ENCODE measurements at regions of chr6 and their contacts with region 1.

Region 1: DNA sequence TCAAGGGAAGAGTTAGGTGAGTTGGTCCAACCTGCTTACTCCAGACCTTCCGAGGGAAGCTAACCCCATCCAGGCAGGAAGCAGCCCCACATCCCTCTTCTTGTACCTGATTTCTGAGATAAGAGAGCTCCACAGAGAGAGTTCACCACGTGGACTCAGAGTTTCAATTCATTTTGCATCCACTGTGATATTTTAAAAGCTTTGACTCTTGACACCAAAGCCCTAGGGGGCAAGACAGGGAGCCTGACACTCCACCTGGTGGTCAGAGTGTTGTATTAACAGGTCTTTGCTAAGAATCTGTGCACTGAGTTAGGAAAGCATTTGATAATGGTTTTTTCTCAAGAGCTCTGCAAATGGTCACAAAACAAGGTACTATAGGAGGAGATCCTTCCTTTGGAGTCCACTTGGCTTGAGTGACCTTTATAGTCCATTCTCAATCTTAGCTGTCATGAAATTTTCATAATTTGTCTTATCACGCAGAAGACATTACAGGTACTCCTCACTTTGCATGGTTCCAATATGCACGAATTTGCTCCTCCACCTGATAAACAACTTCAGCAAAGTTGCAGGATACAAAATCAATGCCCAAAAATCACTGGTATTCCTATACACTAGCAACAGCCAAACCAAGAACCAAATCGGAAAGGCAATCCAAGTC is 56.2 kb upstream of the RIPOR2 start:
- DNase-seq: peak; percentile 86
- ATAC-seq: peak; percentile 95
- H3K4me3 Mint-ChIP-seq: no peak overlapping the region
- H3K27ac Mint-ChIP-seq: peak overlapping the region; percentile 75
- H3K4me1 Mint-ChIP-seq: peaks cover 46% of the 10 kb centered on the region
- H3K27me3 Mint-ChIP-seq: no peaks in the 10 kb centered on the region

Region 2: GRCh38 chr6:24888715-24889370 is 103.1 kb before region 1 on chr6:
- CTCF ChIA-PET with region 1: interaction called, 20 read pairs
- POLR2A ChIA-PET with region 1: interaction called, 3 read pairs
- DNase-seq: no peak
- ATAC-seq: no peak
- H3K4me3 Mint-ChIP-seq: no peak overlapping the region
- H3K27ac Mint-ChIP-seq: peak overlapping the region; percentile 44
- H3K4me1 Mint-ChIP-seq: peaks cover 72% of the 10 kb centered on the region
- H3K27me3 Mint-ChIP-seq: no peaks in the 10 kb centered on the region

Region 3: GRCh38 chr6:24919004-24919892 is 72.7 kb before region 1 on chr6:
- CTCF ChIA-PET with region 1: interaction called, 433 read pairs
- POLR2A ChIA-PET with region 1: interaction called, 9 read pairs
- DNase-seq: peak; percentile 44
- ATAC-seq: peak; percentile 50
- H3K4me3 Mint-ChIP-seq: peak overlapping the region; percentile 53
- H3K27ac Mint-ChIP-seq: peak overlapping the region; percentile 62
- H3K4me1 Mint-ChIP-seq: peaks cover 86% of the 10 kb centered on the region
- H3K27me3 Mint-ChIP-seq: no peaks in the 10 kb centered on the region

Region 4: GRCh38 chr6:24960991-24961475 is 30.9 kb before region 1 on chr6:
- CTCF ChIA-PET with region 1: interaction called, 44 read pairs
- POLR2A ChIA-PET with region 1: no interaction called
- DNase-seq: no peak
- ATAC-seq: no peak
- H3K4me3 Mint-ChIP-seq: no peak overlapping the region
- H3K27ac Mint-ChIP-seq: peak overlapping the region; percentile 69
- H3K4me1 Mint-ChIP-seq: peaks cover 53% of the 10 kb centered on the region
- H3K27me3 Mint-ChIP-seq: no peaks in the 10 kb centered on the region

Region 5: GRCh38 chr6:24980507-24981387 is 11.2 kb before region 1 on chr6:
- CTCF ChIA-PET with region 1: interaction called, 55 read pairs
- POLR2A ChIA-PET with region 1: interaction called, 3 read pairs
- DNase-seq: no peak
- ATAC-seq: no peak
- H3K4me3 Mint-ChIP-seq: no peak overlapping the region
- H3K27ac Mint-ChIP-seq: no peak overlapping the region
- H3K4me1 Mint-ChIP-seq: peaks cover 7% of the 10 kb centered on the region
- H3K27me3 Mint-ChIP-seq: no peaks in the 10 kb centered on the region

Region 6: DNA sequence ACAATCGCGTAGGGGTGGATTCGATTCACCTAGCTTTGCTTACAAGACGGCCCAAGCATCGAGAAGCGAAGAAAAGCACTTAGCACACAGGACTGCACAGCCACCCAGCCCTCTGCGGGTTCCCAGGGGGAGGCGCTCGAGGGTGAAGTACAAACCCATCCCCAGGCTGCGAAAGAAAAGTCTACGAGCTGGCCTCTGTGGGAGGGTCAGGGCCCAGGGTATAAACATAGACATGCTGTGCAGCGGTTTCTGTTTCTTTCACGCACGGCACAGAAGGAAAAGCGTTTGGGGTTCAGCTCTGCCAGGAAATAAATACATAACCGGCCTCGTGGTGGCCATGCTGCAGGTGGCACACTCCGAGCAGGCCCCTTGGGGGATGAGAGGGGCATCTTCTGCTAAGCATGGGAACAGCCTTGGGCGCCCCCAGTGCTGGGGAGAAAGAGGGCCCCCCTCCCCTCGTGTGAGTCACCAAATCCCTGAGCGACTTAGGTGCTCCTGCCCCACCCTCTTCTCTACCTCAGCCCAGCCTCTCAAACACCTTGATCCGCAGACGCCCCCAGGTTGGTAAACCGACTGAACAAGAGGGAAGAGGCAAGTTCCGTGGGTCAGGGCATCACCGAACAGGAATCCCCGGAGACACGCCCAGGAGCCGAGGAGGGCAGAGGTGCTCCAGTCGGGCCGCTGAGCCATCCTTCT is 35.4 kb after region 1 on chr6:
- CTCF ChIA-PET with region 1: interaction called, 37 read pairs
- POLR2A ChIA-PET with region 1: no interaction called
- DNase-seq: peak; percentile 88
- ATAC-seq: peak; percentile 97
- H3K4me3 Mint-ChIP-seq: peak overlapping the region; percentile 65
- H3K27ac Mint-ChIP-seq: peak overlapping the region; percentile 81
- H3K4me1 Mint-ChIP-seq: peaks cover 48% of the 10 kb centered on the region
- H3K27me3 Mint-ChIP-seq: no peaks in the 10 kb centered on the region

Region 7: DNA sequence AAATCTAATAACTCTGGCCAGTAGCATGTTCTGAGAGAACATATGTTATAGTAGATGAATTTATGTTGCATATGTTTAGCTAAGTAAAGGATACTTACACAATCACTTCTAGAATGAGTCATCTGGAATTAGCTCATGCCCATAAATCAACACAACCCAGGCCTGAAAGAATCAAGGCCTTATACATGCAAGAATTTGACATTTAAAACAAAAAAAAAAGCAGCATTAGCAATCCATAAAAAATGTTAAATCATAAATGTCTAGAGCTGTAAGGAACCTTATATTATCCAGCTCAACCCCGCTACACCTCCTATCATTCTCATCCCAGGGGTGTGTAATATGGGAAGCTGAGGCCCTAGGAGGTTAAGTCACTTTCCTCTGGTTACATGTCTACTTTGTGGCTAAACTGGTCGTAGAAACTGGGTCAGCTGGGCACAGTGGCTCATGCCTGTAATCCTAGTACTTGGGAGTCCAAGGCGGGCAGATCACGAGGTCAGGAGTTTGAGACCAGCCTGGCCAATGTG is 182.1 kb after region 1 on chr6:
- CTCF ChIA-PET with region 1: no interaction called
- POLR2A ChIA-PET with region 1: no interaction called
- DNase-seq: no peak
- ATAC-seq: no peak
- H3K4me3 Mint-ChIP-seq: no peak overlapping the region
- H3K27ac Mint-ChIP-seq: no peak overlapping the region
- H3K4me1 Mint-ChIP-seq: peaks cover 52% of the 10 kb centered on the region
- H3K27me3 Mint-ChIP-seq: no peaks in the 10 kb centered on the region

Measured in activated CD8-positive, alpha-beta T cell treated with anti-CD3 and anti-CD28 coated beads, Interleukin-2, amount 10 ng/mL, durations not matched to agents 7 days and 5 days (primary cell).